Astrocyte of the cerebellum (primary cell): ENCODE measurements at regions of chr19 and their contacts with region 1.

Region 1: DNA sequence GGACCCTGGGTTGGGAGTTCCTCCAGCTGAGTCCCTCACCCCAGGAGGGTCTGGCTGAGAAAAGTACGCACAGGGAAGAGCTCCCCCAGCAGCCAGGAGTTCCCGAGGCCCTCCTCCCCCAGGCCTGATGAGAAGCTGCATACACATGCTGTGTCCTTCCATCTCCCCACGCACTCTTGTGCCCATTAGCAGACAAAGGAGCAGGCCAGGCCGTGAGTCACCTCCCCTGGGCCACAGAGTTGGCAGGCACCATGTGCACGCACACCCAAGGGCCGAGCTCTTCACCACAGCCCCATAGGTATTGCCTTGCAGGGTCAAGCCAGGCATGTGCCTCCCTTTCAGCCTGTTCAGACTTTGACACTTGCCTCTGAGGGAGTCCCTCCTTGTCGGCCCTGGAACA is 17.5 kb downstream of the MAU2 start:
- DNase-seq: peak; percentile 19
- H3K4me3 ChIP-seq: no peak overlapping the region
- CTCF ChIP-seq: no peak

Region 2: GRCh38 chr19:19224852-19225494 is 113.1 kb before region 1 on chr19:
- in situ Hi-C with region 1: no loop called
- DNase-seq: no peak
- H3K4me3 ChIP-seq: no peak overlapping the region
- CTCF ChIP-seq: peak; percentile 44

Region 3: DNA sequence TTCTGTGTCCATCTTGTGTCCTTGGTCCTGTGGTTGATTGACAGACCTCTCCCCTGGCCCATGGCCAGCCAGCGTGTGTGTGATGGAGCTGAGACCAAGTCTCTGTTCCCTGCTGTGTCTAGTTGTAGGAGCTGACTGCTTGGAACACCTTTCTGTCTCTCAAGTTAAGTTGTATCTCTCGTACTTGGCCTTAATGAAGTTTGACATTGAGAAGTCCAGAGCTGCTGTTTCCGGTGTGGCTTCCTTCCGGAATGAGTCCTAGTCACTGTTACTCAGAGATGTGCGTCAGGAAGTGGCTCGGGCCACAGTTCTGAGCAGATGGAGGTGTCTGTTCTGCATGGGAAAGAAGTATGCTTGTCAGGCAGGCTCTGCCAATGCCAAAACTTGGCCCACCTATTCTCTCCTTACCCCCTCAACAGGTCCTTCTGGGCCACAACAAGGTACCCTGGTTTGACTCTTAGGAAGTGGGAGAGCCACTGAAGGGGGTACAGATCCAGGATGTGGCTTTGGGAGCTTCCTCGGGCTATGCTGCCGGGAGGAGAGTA is 121.7 kb after region 1 on chr19:
- in situ Hi-C with region 1: loop called (anchors 10 kb)
- DNase-seq: no peak
- H3K4me3 ChIP-seq: no peak overlapping the region
- CTCF ChIP-seq: no peak